Mammary epithelial cell (primary cell): ENCODE measurements at regions of chr9 and their contacts with region 1.

Region 1: GRCh38 chr9:886886-887285 is 45.4 kb downstream of the DMRT1 start:
- DNase-seq: no peak
- H3K4me3 ChIP-seq: no peak overlapping the region
- H3K27ac ChIP-seq: no peak overlapping the region
- H3K4me1 ChIP-seq: no peaks in the 10 kb centered on the region
- H3K27me3 ChIP-seq: no peaks in the 10 kb centered on the region
- CTCF ChIP-seq: no peak

Region 2: GRCh38 chr9:316382-316965 is 570.4 kb before region 1 on chr9:
- CTCF ChIA-PET with region 1: no interaction called
- dilution Hi-C with region 1: no loop called
- in situ Hi-C with region 1: no loop called
- intact Hi-C with region 1: no loop called
- DNase-seq: no peak
- H3K4me3 ChIP-seq: no peak overlapping the region
- H3K27ac ChIP-seq: no peak overlapping the region
- H3K4me1 ChIP-seq: no peaks in the 10 kb centered on the region
- H3K27me3 ChIP-seq: no peaks in the 10 kb centered on the region
- CTCF ChIP-seq: peak in 1 of 2 donors; percentile 29

Region 3: GRCh38 chr9:841371-842209 is 45.3 kb before region 1 on chr9 and contains the start of gene DMRT1:
- CTCF ChIA-PET with region 1: no interaction called
- dilution Hi-C with region 1: loop called (anchors 5 kb)
- in situ Hi-C with region 1: no loop called
- intact Hi-C with region 1: no loop called
- DNase-seq: no peak
- H3K4me3 ChIP-seq: no peak within 1 kb of the TSS
- H3K27ac ChIP-seq: no peak within 1 kb of the TSS
- H3K4me1 ChIP-seq: no peaks in the 10 kb centered on the region
- H3K27me3 ChIP-seq: peaks cover 20% of the 10 kb centered on the region
- CTCF ChIP-seq: no peak
- total RNA-seq, gene DMRT1: not detected

Region 4: DNA sequence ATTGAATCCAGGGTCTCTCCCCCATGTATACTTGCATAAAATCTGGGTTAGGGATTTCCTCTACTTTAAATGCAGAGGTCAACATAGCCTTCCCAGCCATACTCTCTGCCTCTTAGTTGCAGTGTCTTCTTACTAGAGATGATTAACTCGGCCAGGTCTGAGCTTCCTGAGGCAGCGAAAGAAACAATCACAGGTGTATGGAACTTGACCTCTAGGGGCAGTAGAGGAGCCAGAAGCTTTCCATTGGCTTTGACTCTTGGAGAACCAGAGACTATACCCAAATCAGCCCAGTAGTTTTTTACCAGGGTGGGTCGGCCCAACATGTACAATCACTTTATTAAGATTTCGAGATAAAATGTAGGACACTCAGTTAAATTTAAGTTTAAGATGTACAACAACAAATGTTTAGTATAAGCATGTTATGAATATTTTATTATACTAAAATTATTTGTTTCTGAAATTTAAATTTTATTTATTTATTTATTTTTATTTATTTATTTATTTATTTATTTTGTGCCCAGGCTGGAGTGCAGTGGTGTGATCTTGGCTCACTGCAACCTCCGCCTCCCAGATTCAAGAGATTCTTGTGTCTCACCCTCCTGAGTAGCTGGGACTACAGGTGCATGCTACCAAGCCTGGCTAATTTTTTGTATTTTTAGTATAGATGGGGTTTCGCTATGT is 41.6 kb after region 1 on chr9:
- CTCF ChIA-PET with region 1: no interaction called
- dilution Hi-C with region 1: loop called (anchors 5 kb)
- in situ Hi-C with region 1: no loop called
- intact Hi-C with region 1: no loop called
- DNase-seq: no peak
- H3K4me3 ChIP-seq: no peak overlapping the region
- H3K27ac ChIP-seq: no peak overlapping the region
- H3K4me1 ChIP-seq: no peaks in the 10 kb centered on the region
- H3K27me3 ChIP-seq: no peaks in the 10 kb centered on the region
- CTCF ChIP-seq: peak; percentile 37 to 49

Region 5: DNA sequence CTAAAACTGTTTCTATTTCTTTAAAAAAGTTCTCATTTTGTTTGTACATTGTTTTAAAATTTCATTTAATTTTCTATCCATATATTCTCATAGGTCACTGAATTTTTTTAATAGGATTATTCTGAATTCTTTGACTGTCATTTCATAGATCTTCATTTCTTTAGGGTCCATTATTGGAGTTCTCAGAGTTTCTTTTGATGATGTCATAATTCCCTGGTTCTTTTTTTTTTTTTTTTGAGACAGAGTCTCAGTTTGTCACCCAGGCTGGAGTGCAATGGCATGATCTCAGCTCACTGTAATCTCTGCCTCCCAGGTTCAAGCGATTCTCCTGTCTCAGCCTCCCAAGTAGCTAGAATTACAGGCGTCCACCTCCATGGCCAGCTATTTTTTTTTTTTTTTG is 253.2 kb after region 1 on chr9:
- CTCF ChIA-PET with region 1: no interaction called
- dilution Hi-C with region 1: no loop called
- in situ Hi-C with region 1: no loop called
- intact Hi-C with region 1: no loop called
- DNase-seq: no peak
- H3K4me3 ChIP-seq: no peak overlapping the region
- H3K27ac ChIP-seq: no peak overlapping the region
- H3K4me1 ChIP-seq: no peaks in the 10 kb centered on the region
- H3K27me3 ChIP-seq: no peaks in the 10 kb centered on the region
- CTCF ChIP-seq: no peak